ENCODE measurements at regions of chr12 and their contacts with region 1.

Region 1: GRCh38 chr12:124906606-124907261 is 7.7 kb downstream of the UBC start:
- DNase-seq: peak; percentile 73 to 96
- ATAC-seq: peak; percentile 88 to 95 (median 95)
- H3K4me3 ChIP-seq: no peak overlapping the region
- H3K4me3 Mint-ChIP-seq: peak overlapping the region; percentile 11
- H3K27ac ChIP-seq: no peak overlapping the region
- H3K27ac Mint-ChIP-seq: peak overlapping the region; percentile 37 to 71
- H3K4me1 ChIP-seq: peaks cover 7% of the 10 kb centered on the region
- H3K4me1 Mint-ChIP-seq: peaks cover 28 to 30% of the 10 kb centered on the region in 2 donors
- H3K27me3 ChIP-seq: no peaks in the 10 kb centered on the region
- H3K27me3 Mint-ChIP-seq: no peaks in the 10 kb centered on the region
- CTCF ChIP-seq: peak; percentile 100

Region 2: GRCh38 chr12:124884587-124885438 is 21.9 kb before region 1 on chr12:
- intact Hi-C with region 1: no loop called
- DNase-seq: no peak
- ATAC-seq: no peak
- H3K4me3 ChIP-seq: no peak overlapping the region
- H3K4me3 Mint-ChIP-seq: no peak overlapping the region
- H3K27ac ChIP-seq: peak overlapping the region; percentile 42
- H3K27ac Mint-ChIP-seq: no peak overlapping the region
- H3K4me1 ChIP-seq: peaks cover 26% of the 10 kb centered on the region
- H3K4me1 Mint-ChIP-seq: peaks cover 0 to 9% of the 10 kb centered on the region in 2 donors
- H3K27me3 ChIP-seq: no peaks in the 10 kb centered on the region
- H3K27me3 Mint-ChIP-seq: no peaks in the 10 kb centered on the region
- CTCF ChIP-seq: no peak

Region 3: GRCh38 chr12:124917135-124917840 is 10.6 kb after region 1 on chr12:
- intact Hi-C with region 1: loop called (anchors 1 kb)
- DNase-seq: peak; percentile 87 to 97
- ATAC-seq: peak; percentile 71 to 88 (median 79)
- H3K4me3 ChIP-seq: peak overlapping the region; percentile 25
- H3K4me3 Mint-ChIP-seq: peak overlapping the region; percentile 92
- H3K27ac ChIP-seq: peak overlapping the region; percentile 91
- H3K27ac Mint-ChIP-seq: peak overlapping the region; percentile 100
- H3K4me1 ChIP-seq: peaks cover 74% of the 10 kb centered on the region
- H3K4me1 Mint-ChIP-seq: peaks cover 87 to 90% of the 10 kb centered on the region in 2 donors
- H3K27me3 ChIP-seq: no peaks in the 10 kb centered on the region
- H3K27me3 Mint-ChIP-seq: no peaks in the 10 kb centered on the region
- CTCF ChIP-seq: no peak

Region 4: GRCh38 chr12:124927201-124928094 is 20.7 kb after region 1 on chr12:
- intact Hi-C with region 1: loop called (anchors 2 kb)
- DNase-seq: peak; percentile 90 to 95
- ATAC-seq: peak; percentile 88 to 93 (median 90)
- H3K4me3 ChIP-seq: peak overlapping the region; percentile 42
- H3K4me3 Mint-ChIP-seq: peak overlapping the region; percentile 98
- H3K27ac ChIP-seq: peak overlapping the region; percentile 43
- H3K27ac Mint-ChIP-seq: peak overlapping the region; percentile 94 to 99
- H3K4me1 ChIP-seq: peaks cover 18% of the 10 kb centered on the region
- H3K4me1 Mint-ChIP-seq: peaks cover 30 to 38% of the 10 kb centered on the region in 2 donors
- H3K27me3 ChIP-seq: no peaks in the 10 kb centered on the region
- H3K27me3 Mint-ChIP-seq: peaks cover 0 to 3% of the 10 kb centered on the region in 2 donors
- CTCF ChIP-seq: no peak

Region 5: GRCh38 chr12:124940549-124941527 is 34.1 kb after region 1 on chr12:
- intact Hi-C with region 1: loop called (anchors 1 kb)
- DNase-seq: peak; percentile 64 to 91
- ATAC-seq: peak; percentile 51 to 74 (median 63)
- H3K4me3 ChIP-seq: peak overlapping the region; percentile 66
- H3K4me3 Mint-ChIP-seq: no peak overlapping the region
- H3K27ac ChIP-seq: peak overlapping the region; percentile 80
- H3K27ac Mint-ChIP-seq: no peak overlapping the region
- H3K4me1 ChIP-seq: peaks cover 28% of the 10 kb centered on the region
- H3K4me1 Mint-ChIP-seq: no peaks in the 10 kb centered on the region
- H3K27me3 ChIP-seq: no peaks in the 10 kb centered on the region
- H3K27me3 Mint-ChIP-seq: no peaks in the 10 kb centered on the region
- CTCF ChIP-seq: peak; percentile 81

Region 6: DNA sequence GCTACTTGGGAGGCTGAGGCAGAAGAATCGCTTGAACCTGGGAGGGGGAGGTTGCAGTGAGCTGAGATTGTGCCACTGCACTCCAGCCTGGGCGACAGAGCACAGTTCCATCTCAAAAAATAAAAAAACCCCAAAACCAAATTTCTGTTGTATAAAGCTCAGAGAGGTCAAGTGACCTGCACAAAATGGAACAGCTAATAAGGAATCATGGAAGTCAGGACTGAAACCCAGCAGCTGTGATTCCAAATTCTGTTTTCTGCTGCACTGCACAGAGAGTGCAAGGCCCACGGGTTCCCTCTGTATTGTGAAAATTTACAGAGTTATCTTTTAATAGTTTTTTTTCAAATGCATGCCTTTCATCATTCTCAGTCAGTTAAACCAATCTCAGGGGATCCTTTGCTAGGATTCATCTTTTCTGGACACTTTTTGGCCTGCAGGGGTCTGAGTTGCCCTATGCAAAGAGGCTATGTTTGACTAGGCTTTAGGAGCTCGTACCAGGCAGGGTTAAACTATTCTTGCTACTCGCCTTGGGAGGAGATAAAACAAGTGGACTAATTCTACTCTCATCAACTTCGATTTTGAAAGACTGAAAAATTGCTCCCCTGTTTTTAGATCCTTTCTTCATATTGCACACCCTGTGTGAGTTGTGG is 132.4 kb after region 1 on chr12:
- intact Hi-C with region 1: no loop called
- DNase-seq: no peak
- ATAC-seq: no peak
- H3K4me3 ChIP-seq: no peak overlapping the region
- H3K4me3 Mint-ChIP-seq: no peak overlapping the region
- H3K27ac ChIP-seq: no peak overlapping the region
- H3K27ac Mint-ChIP-seq: no peak overlapping the region
- H3K4me1 ChIP-seq: no peaks in the 10 kb centered on the region
- H3K4me1 Mint-ChIP-seq: no peaks in the 10 kb centered on the region
- H3K27me3 ChIP-seq: no peaks in the 10 kb centered on the region
- H3K27me3 Mint-ChIP-seq: no peaks in the 10 kb centered on the region
- CTCF ChIP-seq: no peak